Panc1 (cell line): ENCODE measurements at regions of chr14 and their contacts with region 1.

Region 1: DNA sequence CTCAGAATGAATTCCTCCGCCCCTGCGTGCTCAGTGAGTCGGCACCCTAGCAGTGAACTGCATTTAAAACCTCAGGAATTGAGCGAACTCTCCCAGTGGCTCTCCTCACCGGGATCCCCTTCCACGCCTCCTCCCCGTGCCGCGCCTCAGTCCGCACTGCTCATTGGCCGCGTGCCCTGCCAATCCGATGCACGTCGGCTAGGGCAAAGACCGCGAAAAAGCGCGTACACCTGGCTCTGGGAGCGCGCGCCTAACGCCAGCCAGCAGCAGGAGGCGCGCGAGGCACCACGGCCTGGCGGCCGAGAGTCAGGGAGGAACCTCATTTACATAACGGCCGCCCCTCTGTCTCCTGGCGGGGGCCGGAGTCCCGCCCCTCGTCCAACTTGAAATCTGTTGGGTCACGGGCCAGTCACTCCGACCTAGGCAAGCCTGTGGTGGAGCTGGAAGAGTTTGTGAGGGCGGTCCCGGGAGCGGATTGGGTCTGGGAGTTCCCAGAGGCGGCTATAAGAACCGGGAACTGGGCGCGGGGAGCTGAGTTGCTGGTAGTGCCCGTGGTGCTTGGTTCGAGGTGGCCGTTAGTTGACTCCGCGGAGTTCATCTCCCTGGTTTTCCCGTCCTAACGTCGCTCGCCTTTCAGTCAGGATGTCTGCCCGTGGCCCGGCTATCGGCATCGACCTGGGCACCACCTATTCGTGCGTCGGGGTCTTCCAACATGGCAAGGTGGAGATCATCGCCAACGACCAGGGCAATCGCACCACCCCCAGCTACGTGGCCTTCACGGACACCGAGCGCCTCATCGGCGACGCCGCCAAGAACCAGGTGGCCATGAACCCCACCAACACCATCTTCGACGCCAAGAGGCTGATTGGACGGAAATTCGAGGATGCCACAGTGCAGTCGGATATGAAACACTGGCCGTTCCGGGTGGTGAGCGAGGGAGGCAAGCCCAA is at the start of gene HSPA2:
- DNase-seq: peak; percentile 69
- ATAC-seq: peak; percentile 96
- H3K4me3 ChIP-seq: peak within 1 kb of the TSS; percentile 50 to 58
- H3K27ac ChIP-seq: peak within 1 kb of the TSS; percentile 89
- H3K4me1 ChIP-seq: no peaks in the 10 kb centered on the region; the same call in 1 of the 2 replicates
- H3K27me3 ChIP-seq: no peaks in the 10 kb centered on the region
- CTCF ChIP-seq: peak; percentile 84
- total RNA-seq, gene HSPA2: 7.7 TPM

Region 2: DNA sequence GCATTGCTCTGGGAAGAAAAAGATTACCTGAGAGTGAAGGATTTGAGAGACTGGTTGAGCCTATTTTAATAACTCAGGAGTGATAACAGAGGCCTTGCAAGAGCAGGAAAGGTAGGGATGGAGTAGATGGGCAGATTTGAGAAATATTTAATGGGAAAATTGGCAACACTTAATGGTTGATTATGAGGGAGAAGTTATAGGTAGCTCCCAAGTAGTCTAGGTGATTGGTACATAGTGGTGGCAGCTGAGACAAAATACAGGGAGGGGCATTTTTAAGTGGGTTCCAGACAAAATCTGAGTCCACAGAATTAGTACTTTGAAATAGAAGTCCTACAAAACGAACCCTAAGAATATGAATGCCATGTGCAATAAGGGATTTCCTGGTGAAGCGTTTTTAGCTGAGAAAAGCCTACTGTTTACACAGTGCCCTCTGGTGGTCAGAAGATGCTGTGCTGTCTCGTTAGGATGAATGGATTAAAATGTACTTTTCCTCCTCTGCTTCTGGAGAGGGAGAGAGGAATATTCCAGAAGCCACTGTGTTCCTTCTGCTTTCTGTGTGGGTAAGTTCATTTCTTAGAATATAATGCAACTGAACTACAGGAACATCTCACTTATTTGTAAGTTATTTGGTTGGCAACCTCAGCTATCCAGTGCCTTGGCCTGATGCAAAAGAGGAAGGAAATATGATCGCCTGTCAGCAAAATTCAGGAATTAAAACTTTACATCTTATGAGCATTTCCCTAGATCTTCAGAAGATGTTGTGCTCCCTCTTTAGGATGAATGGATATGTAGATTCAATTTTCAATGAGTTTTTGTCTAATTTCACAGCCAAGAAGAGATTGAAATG is 29.4 kb before region 1 on chr14:
- CTCF ChIA-PET with region 1: interaction called, 3 read pairs
- POLR2A ChIA-PET with region 1: interaction called, 15 read pairs
- in situ Hi-C with region 1: no loop called
- intact Hi-C with region 1: no loop called
- DNase-seq: peak; percentile 54
- ATAC-seq: peak; percentile 72
- H3K4me3 ChIP-seq: no peak overlapping the region
- H3K27ac ChIP-seq: peak overlapping the region; percentile 42
- H3K4me1 ChIP-seq: peaks cover 33% of the 10 kb centered on the region
- H3K27me3 ChIP-seq: no peaks in the 10 kb centered on the region
- CTCF ChIP-seq: peak; percentile 82

Region 3: DNA sequence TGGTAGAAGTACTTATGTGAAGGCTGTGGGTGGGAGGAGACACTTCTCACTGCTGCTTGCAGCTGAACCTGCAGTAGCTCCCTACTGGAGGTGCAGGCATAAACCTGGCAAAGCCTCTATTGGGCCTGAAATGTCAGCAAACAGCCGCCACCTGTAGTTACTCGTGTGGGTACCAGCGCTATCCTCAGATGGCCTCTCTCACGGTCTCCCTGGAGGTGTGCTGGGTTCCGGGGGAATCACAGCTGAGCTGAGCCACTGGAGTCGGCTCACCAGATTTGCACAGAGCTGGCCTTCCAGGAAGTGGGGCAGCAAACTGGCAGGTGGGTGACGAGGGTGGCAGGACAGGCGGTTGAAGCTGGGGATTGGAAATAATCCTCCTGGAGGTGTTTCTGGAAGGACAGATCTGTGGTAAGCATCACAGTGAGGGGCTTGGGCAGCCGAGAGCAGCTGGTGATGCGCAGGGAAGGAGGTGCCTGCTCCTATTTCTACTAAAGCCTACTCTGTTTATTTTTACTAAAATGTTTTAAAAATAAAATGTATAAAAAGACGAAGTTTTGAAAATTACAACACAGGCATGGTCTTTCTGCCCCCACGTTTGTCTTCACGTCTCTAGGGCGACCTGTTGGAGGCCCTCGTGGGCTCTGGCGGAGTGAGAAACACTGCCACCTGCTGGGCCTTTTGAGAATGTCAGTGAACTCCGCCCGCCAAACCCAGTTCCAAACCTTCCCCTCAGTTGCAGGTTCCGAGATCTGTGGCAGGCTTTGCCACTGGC is 95.9 kb after region 1 on chr14:
- CTCF ChIA-PET with region 1: interaction called, 4 read pairs
- POLR2A ChIA-PET with region 1: interaction called, 9 read pairs
- in situ Hi-C with region 1: no loop called
- intact Hi-C with region 1: loop called (anchors 10 kb)
- DNase-seq: peak; percentile 28
- ATAC-seq: peak; percentile 95
- H3K4me3 ChIP-seq: no peak overlapping the region
- H3K27ac ChIP-seq: no peak overlapping the region
- H3K4me1 ChIP-seq: no peaks in the 10 kb centered on the region; the same call in 1 of the 2 replicates
- H3K27me3 ChIP-seq: no peaks in the 10 kb centered on the region
- CTCF ChIP-seq: peak; percentile 89

Region 4: DNA sequence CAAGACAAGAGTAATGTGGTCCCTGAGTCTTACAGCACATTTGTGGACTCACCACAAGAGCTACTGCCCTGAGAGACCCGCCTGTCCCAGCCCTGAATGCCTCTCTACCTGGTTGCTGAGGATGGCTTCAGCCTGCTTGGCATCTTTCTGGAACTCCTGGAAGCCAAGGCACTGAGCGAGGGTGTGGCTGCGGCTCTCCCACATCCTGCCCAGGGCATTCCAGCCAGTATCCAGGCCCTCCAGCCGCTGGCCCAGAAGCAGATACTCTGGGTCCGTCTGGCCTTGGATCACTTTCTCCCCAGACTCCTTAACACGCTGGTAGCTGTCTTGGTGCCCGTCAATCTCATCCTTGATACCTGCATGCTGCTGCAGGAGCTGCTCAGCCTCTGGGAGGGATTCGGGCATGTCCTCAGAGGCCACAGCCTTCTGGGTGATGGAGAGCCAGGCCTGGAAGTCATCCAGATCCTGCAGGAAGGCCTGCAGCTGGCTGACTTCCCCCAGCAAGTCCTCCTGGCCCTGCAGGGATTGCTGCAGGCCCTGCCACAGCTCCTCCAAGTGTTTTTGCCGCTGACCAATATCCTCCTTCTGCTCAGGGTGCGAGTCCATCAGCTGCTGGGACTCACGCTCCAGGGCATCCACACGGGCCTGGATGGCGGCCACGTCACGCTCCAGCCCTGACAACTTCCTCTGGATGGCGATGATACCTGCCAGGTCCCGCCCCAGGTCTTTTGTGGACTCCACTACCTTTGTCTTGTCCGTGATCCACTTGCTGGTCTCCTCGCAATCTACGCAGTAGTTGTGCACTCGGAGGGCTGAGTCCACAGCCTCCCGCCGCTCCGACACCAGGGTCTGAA is 246.0 kb after region 1 on chr14:
- CTCF ChIA-PET with region 1: no interaction called
- POLR2A ChIA-PET with region 1: no interaction called
- in situ Hi-C with region 1: no loop called
- intact Hi-C with region 1: no loop called
- DNase-seq: no peak
- ATAC-seq: no peak
- H3K4me3 ChIP-seq: no peak overlapping the region
- H3K27ac ChIP-seq: no peak overlapping the region
- H3K4me1 ChIP-seq: no peaks in the 10 kb centered on the region
- H3K27me3 ChIP-seq: no peaks in the 10 kb centered on the region
- CTCF ChIP-seq: no peak